ENCODE measurements at regions of chr2 and their contacts with region 1.

Region 1: DNA sequence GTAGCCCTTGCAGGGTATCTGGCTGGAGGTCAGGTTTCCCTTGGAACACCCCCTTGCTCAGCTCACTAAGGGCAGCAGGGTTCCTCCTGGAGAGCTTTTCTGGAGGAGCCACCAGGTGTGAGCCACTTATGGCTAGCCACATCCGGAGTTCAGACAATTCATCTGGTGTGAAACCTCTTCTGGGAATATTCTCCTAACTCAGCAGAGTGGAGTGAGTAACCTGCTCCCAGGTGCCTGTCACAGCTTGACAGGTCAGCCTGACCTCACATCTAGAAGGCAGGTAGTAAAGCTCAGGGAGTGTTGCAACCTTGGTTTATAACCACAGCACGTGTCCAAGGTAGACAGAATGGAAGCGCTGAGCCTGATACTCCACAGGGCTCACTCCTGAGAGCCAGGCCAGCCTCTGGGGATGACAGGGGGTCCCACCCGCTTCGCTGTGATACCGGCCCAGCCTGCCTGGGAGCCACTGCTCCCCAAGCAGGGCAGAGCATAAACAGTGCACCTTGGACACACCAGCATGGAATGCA is 62.6 kb upstream of the TGFA start:
- DNase-seq: no peak
- H3K4me3 ChIP-seq: no peak overlapping the region
- H3K4me3 Mint-ChIP-seq: no peak overlapping the region
- H3K27ac ChIP-seq: no peak overlapping the region
- H3K27ac Mint-ChIP-seq: no peak overlapping the region
- H3K4me1 ChIP-seq: no peaks in the 10 kb centered on the region
- H3K4me1 Mint-ChIP-seq: no peaks in the 10 kb centered on the region
- H3K27me3 ChIP-seq: no peaks in the 10 kb centered on the region
- H3K27me3 Mint-ChIP-seq: peaks cover 2 to 13% of the 10 kb centered on the region in 2 donors

Region 2: DNA sequence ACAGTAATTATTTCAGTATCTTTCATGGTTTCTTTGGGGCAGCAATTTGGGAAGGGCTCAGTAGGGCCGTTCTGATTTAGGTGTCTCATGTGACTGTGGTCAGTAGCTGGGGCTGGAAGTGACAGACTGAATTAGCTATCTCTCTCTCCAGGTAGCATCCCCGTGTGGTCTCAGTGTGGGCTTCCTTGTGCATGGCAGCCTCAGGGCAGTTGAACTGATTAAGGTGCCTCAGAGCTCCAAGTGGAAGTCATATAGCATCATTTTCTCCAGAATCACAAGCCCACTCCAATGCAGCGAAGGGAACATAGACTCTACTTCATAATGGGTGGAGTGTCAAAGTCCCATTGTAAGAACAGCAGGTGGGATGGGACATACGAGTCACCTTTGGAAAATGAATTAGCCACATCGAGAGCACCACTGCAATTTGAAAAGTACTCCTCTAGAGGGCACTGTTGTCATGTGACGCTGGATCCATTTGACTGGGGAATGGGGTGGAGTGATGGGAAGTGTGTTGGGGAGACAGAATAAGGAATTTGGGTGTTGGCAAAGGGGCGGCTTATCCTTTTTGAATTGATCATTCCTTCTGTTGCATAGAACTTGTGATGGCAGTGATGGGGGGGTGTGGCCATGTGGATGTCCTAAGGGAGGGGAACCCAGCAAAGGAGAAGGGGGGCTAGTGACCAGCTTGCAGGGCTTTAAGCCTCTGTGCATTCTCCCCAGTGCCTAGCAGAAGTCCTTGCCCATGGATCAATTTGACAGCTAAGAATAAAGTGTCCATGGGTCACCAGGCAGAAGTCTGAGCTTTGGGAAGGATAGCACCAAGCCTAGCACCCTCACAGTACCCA is 275.1 kb before region 1 on chr2:
- CTCF ChIA-PET with region 1: interaction called, 34 read pairs
- POLR2A ChIA-PET with region 1: no interaction called
- DNase-seq: peak in 4 of 5 donors; percentile 10 to 51 (median 34)
- H3K4me3 ChIP-seq: no peak overlapping the region
- H3K4me3 Mint-ChIP-seq: no peak overlapping the region
- H3K27ac ChIP-seq: no peak overlapping the region
- H3K27ac Mint-ChIP-seq: peak overlapping the region in 1 of 8 donors; percentile 9
- H3K4me1 ChIP-seq: no peaks in the 10 kb centered on the region
- H3K4me1 Mint-ChIP-seq: no peaks in the 10 kb centered on the region
- H3K27me3 ChIP-seq: no peaks in the 10 kb centered on the region
- H3K27me3 Mint-ChIP-seq: peaks cover 13 to 43% of the 10 kb centered on the region in 2 donors

Region 3: GRCh38 chr2:70425687-70426301 is 190.4 kb before region 1 on chr2:
- CTCF ChIA-PET with region 1: no interaction called
- POLR2A ChIA-PET with region 1: no interaction called
- DNase-seq: no peak
- H3K4me3 ChIP-seq: no peak overlapping the region
- H3K4me3 Mint-ChIP-seq: no peak overlapping the region
- H3K27ac ChIP-seq: no peak overlapping the region
- H3K27ac Mint-ChIP-seq: no peak overlapping the region
- H3K4me1 ChIP-seq: no peaks in the 10 kb centered on the region
- H3K4me1 Mint-ChIP-seq: no peaks in the 10 kb centered on the region
- H3K27me3 ChIP-seq: no peaks in the 10 kb centered on the region
- H3K27me3 Mint-ChIP-seq: peaks cover 11 to 13% of the 10 kb centered on the region in 2 donors

Region 4: GRCh38 chr2:70596739-70597138 is 19.5 kb before region 1 on chr2:
- CTCF ChIA-PET with region 1: no interaction called
- POLR2A ChIA-PET with region 1: no interaction called
- DNase-seq: no peak
- H3K4me3 ChIP-seq: no peak overlapping the region
- H3K4me3 Mint-ChIP-seq: no peak overlapping the region
- H3K27ac ChIP-seq: no peak overlapping the region
- H3K27ac Mint-ChIP-seq: no peak overlapping the region
- H3K4me1 ChIP-seq: no peaks in the 10 kb centered on the region
- H3K4me1 Mint-ChIP-seq: no peaks in the 10 kb centered on the region
- H3K27me3 ChIP-seq: no peaks in the 10 kb centered on the region
- H3K27me3 Mint-ChIP-seq: peaks cover 6 to 17% of the 10 kb centered on the region in 2 donors

Region 5: DNA sequence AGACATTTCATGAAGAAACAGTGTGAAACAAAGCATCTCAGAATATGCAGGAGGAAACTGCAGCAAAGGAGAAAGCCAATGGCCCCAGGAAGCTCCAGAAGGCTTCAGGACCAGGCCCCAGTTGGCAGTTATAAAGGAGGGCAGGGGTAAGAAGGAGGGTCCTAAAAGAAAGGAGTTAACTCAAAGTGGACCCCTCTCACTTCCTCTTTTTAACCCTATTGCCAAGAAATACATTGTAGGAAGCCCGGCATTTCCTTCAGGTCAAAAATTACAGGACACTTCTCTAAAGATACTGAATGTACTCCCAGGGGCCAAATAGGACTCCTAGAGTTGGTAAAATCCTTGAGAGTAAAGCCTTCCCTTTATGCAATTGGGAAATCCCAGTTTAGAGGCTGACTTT is 14.5 kb after region 1 on chr2:
- CTCF ChIA-PET with region 1: interaction called, 13 read pairs
- POLR2A ChIA-PET with region 1: no interaction called
- DNase-seq: no peak
- H3K4me3 ChIP-seq: no peak overlapping the region
- H3K4me3 Mint-ChIP-seq: no peak overlapping the region
- H3K27ac ChIP-seq: no peak overlapping the region
- H3K27ac Mint-ChIP-seq: no peak overlapping the region
- H3K4me1 ChIP-seq: no peaks in the 10 kb centered on the region
- H3K4me1 Mint-ChIP-seq: no peaks in the 10 kb centered on the region
- H3K27me3 ChIP-seq: no peaks in the 10 kb centered on the region
- H3K27me3 Mint-ChIP-seq: peaks cover 6 to 27% of the 10 kb centered on the region in 2 donors

Region 6: DNA sequence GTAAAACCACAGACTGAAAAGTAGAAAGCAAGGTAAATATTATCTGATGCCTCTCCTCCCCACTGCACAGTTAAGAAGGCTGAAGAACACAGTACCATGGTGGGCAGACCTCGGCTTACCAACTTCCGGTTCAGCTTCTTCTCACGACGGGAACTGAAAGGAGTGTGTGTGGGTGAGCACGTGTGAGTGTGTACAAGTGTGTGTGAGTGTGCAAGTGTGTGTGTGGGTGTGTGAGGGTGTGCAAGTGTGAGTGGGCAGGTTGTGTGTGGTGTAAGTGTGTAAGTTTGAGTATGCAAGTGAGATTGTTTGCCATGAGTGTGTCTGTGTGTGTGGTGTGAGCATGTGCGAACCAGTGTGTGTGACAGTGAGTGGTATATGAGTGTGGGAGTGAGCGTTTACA is 48.3 kb after region 1 on chr2:
- CTCF ChIA-PET with region 1: no interaction called
- POLR2A ChIA-PET with region 1: no interaction called
- DNase-seq: peak in 1 of 5 donors; percentile 28
- H3K4me3 ChIP-seq: no peak overlapping the region
- H3K4me3 Mint-ChIP-seq: peak overlapping the region in 3 of 7 donors; percentile 3 to 24 (median 9)
- H3K27ac ChIP-seq: no peak overlapping the region
- H3K27ac Mint-ChIP-seq: peak overlapping the region in 2 of 8 donors; percentile 6 to 48
- H3K4me1 ChIP-seq: peaks cover 14% of the 10 kb centered on the region
- H3K4me1 Mint-ChIP-seq: peaks cover 7 to 14% (median 13%) of the 10 kb centered on the region in 3 donors
- H3K27me3 ChIP-seq: no peaks in the 10 kb centered on the region
- H3K27me3 Mint-ChIP-seq: peaks cover 6 to 8% of the 10 kb centered on the region in 2 donors

Region 7: GRCh38 chr2:70716131-70716743 is 100.0 kb after region 1 on chr2:
- CTCF ChIA-PET with region 1: no interaction called
- POLR2A ChIA-PET with region 1: no interaction called
- DNase-seq: no peak
- H3K4me3 ChIP-seq: no peak overlapping the region
- H3K4me3 Mint-ChIP-seq: no peak overlapping the region
- H3K27ac ChIP-seq: no peak overlapping the region
- H3K27ac Mint-ChIP-seq: no peak overlapping the region
- H3K4me1 ChIP-seq: no peaks in the 10 kb centered on the region
- H3K4me1 Mint-ChIP-seq: no peaks in the 10 kb centered on the region
- H3K27me3 ChIP-seq: no peaks in the 10 kb centered on the region
- H3K27me3 Mint-ChIP-seq: peaks cover 3 to 7% of the 10 kb centered on the region in 2 donors

Measured in CD8-positive, alpha-beta memory T cell (primary cell).